Common myeloid progenitor, CD34-positive (primary cell): ENCODE measurements at regions of chr4 and their contacts with region 1.

Region 1: GRCh38 chr4:81505004-81505598 is 33.4 kb upstream of the RASGEF1B start:
- DNase-seq: peak; percentile 93 to 100 (median 98)
- H3K4me3 ChIP-seq: peak overlapping the region in 3 of 7 experiments; percentile 39 to 43 (median 40)
- H3K27ac ChIP-seq: peak overlapping the region; percentile 68 to 85
- H3K4me1 ChIP-seq: peaks cover 31 to 70% (median 63%) of the 10 kb centered on the region in 4 experiments
- H3K27me3 ChIP-seq: no peaks in the 10 kb centered on the region

Region 2: GRCh38 chr4:81494031-81494431 is 11.1 kb before region 1 on chr4:
- CTCF ChIA-PET with region 1: interaction called, 22 read pairs
- POLR2A ChIA-PET with region 1: interaction called, 4 read pairs
- DNase-seq: peak in 2 of 3 donors; percentile 75 to 81
- H3K4me3 ChIP-seq: peak overlapping the region in 6 of 7 experiments; percentile 12 to 73 (median 37)
- H3K27ac ChIP-seq: peak overlapping the region in 1 of 2 experiments; percentile 56
- H3K4me1 ChIP-seq: peaks cover 6 to 35% (median 25%) of the 10 kb centered on the region in 4 experiments
- H3K27me3 ChIP-seq: no peaks in the 10 kb centered on the region